ENCODE measurements at regions of chrX and their contacts with region 1.

Region 1: DNA sequence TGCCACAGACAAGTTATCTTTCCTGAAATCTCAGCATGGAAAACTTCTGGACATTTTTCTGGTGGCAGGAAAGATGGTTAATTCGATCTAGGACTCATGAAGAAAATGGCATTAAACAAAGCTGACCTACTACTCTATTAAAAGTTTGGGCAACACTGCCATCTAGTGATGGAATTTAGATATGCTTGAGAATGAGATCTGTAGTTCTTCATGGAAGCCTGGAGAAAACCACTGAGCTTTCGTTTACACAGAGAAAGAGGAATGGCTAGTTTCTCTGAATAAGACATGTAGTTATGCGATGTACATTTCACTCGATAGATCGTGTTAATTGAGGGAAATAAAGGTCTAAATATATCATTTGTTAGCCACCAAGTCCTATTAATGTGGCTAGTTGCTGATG is 51.7 kb upstream of the CHRDL1 start:
- DNase-seq: no peak
- H3K4me3 ChIP-seq: no peak overlapping the region
- H3K27ac ChIP-seq: no peak overlapping the region
- H3K4me1 ChIP-seq: no peaks in the 10 kb centered on the region
- H3K27me3 ChIP-seq: no peaks in the 10 kb centered on the region
- CTCF ChIP-seq: peak; percentile 29 to 57 (median 45)
- POLR2A ChIP-seq: no peak

Region 2: GRCh38 chrX:110450050-110450449 is 397.3 kb before region 1 on chrX:
- intact Hi-C with region 1: loop called (anchors 10 kb)
- DNase-seq: peak; percentile 88
- H3K4me3 ChIP-seq: no peak overlapping the region
- H3K27ac ChIP-seq: no peak overlapping the region
- H3K4me1 ChIP-seq: no peaks in the 10 kb centered on the region
- H3K27me3 ChIP-seq: no peaks in the 10 kb centered on the region
- CTCF ChIP-seq: peak; percentile 21 to 64 (median 57)
- POLR2A ChIP-seq: no peak

Region 3: DNA sequence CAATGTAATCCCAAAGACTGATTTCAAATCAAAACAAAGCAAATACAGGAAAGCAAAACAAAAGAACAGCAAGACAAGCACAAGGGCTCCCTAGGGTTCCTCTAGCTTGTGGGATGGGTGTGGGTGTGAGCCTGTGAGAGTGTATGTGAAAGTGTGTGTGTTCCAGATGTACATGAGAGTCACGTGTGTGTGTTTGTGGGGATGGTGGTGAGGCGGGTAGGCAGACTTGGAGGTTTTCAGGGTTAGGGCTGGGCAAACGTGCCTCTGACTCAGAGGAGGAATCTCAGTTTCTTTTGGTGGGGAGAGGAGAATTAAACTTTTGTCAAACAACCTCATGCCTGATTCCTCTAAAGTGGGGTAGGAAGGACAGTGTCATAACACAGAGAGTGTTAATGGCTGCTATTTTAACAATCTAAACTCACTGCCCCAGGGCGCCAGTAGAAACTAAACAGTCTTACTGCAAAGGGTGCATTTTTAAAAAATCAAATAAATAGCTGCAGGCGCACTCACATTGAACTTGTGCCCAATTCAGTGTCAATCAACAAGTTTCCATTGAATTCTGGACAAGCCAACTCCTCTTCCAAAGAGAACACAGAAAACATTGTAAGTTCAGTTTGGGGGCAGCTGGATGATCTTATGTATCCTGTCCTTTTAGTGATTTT is 103.5 kb before region 1 on chrX:
- intact Hi-C with region 1: no loop called
- DNase-seq: no peak
- H3K4me3 ChIP-seq: no peak overlapping the region
- H3K27ac ChIP-seq: no peak overlapping the region
- H3K4me1 ChIP-seq: no peaks in the 10 kb centered on the region
- H3K27me3 ChIP-seq: no peaks in the 10 kb centered on the region
- CTCF ChIP-seq: no peak
- POLR2A ChIP-seq: no peak